ENCODE measurements at regions of chr16 and their contacts with region 1.

Region 1: DNA sequence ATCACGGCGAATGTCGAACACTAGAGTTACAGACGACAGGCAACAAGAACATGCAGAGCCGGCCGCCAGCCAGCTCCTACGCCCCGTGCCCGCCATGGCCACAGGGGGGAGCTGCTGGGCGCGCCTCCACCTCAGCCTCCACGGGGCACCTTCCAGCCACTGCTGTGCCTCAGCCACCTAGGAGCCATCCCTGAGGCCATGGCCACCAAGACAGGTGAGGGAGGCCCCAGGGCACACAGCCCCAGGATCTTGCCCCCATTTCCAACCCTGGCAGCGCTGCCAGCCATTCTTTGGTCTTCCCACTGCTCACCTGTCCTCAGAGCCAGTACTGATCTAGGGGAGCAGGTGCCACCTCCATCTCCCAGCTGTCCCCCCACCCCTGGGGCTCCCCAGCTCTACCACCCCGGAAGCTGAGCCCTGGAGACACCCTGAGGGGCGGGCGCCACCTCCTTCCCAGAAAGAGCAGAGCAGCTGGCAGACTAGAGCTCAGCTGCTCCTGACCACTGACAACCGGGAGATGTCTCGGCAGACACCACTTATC is 11.8 kb downstream of the GNPTG start:
- DNase-seq: peak; percentile 78
- H3K4me3 Mint-ChIP-seq: no peak overlapping the region
- H3K27ac Mint-ChIP-seq: no peak overlapping the region
- H3K4me1 Mint-ChIP-seq: peaks cover 2% of the 10 kb centered on the region
- H3K27me3 Mint-ChIP-seq: no peaks in the 10 kb centered on the region

Region 2: GRCh38 chr16:1378804-1379303 is 15.3 kb after region 1 on chr16:
- CTCF ChIA-PET with region 1: interaction called, 14 read pairs
- DNase-seq: peak; percentile 66
- H3K4me3 Mint-ChIP-seq: peak overlapping the region; percentile 68
- H3K27ac Mint-ChIP-seq: peak overlapping the region; percentile 73
- H3K4me1 Mint-ChIP-seq: peaks cover 19% of the 10 kb centered on the region
- H3K27me3 Mint-ChIP-seq: no peaks in the 10 kb centered on the region

Region 3: GRCh38 chr16:1413684-1414531 is 50.3 kb after region 1 on chr16:
- CTCF ChIA-PET with region 1: interaction called, 12 read pairs
- DNase-seq: peak; percentile 77
- H3K4me3 Mint-ChIP-seq: peak overlapping the region; percentile 85
- H3K27ac Mint-ChIP-seq: peak overlapping the region; percentile 94
- H3K4me1 Mint-ChIP-seq: peaks cover 34% of the 10 kb centered on the region
- H3K27me3 Mint-ChIP-seq: no peaks in the 10 kb centered on the region

Measured in activated naive CD4-positive, alpha-beta T cell treated with anti-CD3 and anti-CD28 coated beads, Interleukin-2, amount 10 ng/mL, durations not matched to agents 7 days and 5 days (primary cell).